Activated CD8-positive, alpha-beta T cell treated with anti-CD3 and anti-CD28 coated beads, Interleukin-2, amount 10 ng/mL, durations not matched to agents 7 days and 5 days (primary cell): ENCODE measurements at regions of chr14 and their contacts with region 1.

Region 1: DNA sequence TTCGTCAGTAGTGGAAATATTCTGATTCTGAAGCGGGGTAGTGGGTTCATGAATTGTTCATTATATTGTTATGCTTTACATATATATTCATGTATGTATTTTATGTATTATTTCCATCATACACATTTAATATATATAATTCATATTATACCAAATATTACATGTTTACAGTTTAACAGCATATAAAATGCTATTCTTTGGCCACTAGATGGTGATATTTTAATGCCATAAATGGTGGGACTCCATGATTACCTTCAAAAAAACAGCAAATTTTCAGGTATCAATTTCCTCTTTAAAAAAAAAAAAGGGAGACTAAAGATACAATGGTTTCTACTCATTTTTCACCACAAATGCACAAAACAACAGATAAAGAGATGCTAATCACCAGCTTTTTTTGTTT is 41.0 kb downstream of the BDKRB1 start:
- DNase-seq: no peak
- ATAC-seq: no peak
- H3K4me3 Mint-ChIP-seq: no peak overlapping the region
- H3K27ac Mint-ChIP-seq: no peak overlapping the region
- H3K4me1 Mint-ChIP-seq: no peaks in the 10 kb centered on the region
- H3K27me3 Mint-ChIP-seq: no peaks in the 10 kb centered on the region

Region 2: GRCh38 chr14:96189281-96189711 is 107.7 kb before region 1 on chr14:
- CTCF ChIA-PET with region 1: no interaction called
- POLR2A ChIA-PET with region 1: no interaction called
- DNase-seq: no peak
- ATAC-seq: no peak
- H3K4me3 Mint-ChIP-seq: no peak overlapping the region
- H3K27ac Mint-ChIP-seq: no peak overlapping the region
- H3K4me1 Mint-ChIP-seq: no peaks in the 10 kb centered on the region
- H3K27me3 Mint-ChIP-seq: peaks cover 21% of the 10 kb centered on the region

Region 3: GRCh38 chr14:96309896-96310330 is 12.9 kb after region 1 on chr14:
- CTCF ChIA-PET with region 1: interaction called, 11 read pairs
- POLR2A ChIA-PET with region 1: no interaction called
- DNase-seq: no peak
- ATAC-seq: no peak
- H3K4me3 Mint-ChIP-seq: no peak overlapping the region
- H3K27ac Mint-ChIP-seq: no peak overlapping the region
- H3K4me1 Mint-ChIP-seq: no peaks in the 10 kb centered on the region
- H3K27me3 Mint-ChIP-seq: no peaks in the 10 kb centered on the region

Region 4: DNA sequence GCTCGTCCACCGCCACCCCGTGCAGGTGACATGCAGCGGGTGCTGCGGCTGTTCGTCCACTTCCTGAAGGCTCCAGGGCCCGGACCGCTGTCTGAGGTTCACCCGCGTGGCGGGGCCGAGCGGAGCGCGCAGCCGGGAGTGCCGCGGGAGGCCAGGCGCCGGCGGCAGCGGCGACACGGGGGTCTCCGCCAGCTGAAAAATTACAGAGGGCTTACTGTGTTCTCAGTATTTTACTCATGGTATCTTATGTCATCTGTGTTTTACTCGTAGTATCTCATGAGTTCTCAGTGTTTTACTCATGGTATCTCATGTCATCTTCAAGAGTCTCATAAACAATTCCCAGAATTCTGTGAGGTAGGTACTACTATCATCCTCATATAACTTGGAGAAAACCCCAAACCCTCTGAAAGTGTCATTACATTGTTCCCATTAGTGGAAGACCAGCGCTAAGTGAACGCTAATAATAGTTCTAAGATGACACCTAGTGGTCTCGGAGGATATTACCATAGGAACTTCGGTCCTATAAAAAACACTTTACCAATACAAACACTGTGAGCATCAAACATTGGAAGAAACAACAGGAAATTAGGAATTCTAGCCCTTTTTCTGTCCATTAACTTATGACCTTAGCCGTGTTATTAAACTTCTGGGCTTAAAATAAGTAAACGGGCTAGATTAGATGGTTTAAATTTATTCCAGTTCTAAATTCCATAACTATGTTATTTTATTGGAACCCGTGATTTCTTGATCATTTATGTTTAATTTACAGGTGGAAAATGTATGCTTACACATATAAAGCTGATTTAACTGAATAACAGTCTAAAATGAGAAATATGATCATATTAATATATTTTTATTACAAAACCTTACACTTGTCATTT is 127.3 kb after region 1 on chr14:
- CTCF ChIA-PET with region 1: interaction called, 22 read pairs
- POLR2A ChIA-PET with region 1: no interaction called
- DNase-seq: peak; percentile 32
- ATAC-seq: peak; percentile 87
- H3K4me3 Mint-ChIP-seq: peak overlapping the region; percentile 65
- H3K27ac Mint-ChIP-seq: no peak overlapping the region
- H3K4me1 Mint-ChIP-seq: peaks cover 4% of the 10 kb centered on the region
- H3K27me3 Mint-ChIP-seq: peaks cover 5% of the 10 kb centered on the region